Right ventricle myocardium inferior (tissue), 1 donor: ENCODE measurements at regions of chr2 and their contacts with region 1.

Region 1: GRCh38 chr2:229045671-229046070 is 225.4 kb downstream of the PID1 start:
- DNase-seq: no peak
- ATAC-seq: peak; percentile 96

Region 2: GRCh38 chr2:229083606-229084340 is 38.1 kb after region 1 on chr2:
- intact Hi-C with region 1: loop called (anchors 5 kb)
- DNase-seq: no peak
- ATAC-seq: peak; percentile 77

Region 3: DNA sequence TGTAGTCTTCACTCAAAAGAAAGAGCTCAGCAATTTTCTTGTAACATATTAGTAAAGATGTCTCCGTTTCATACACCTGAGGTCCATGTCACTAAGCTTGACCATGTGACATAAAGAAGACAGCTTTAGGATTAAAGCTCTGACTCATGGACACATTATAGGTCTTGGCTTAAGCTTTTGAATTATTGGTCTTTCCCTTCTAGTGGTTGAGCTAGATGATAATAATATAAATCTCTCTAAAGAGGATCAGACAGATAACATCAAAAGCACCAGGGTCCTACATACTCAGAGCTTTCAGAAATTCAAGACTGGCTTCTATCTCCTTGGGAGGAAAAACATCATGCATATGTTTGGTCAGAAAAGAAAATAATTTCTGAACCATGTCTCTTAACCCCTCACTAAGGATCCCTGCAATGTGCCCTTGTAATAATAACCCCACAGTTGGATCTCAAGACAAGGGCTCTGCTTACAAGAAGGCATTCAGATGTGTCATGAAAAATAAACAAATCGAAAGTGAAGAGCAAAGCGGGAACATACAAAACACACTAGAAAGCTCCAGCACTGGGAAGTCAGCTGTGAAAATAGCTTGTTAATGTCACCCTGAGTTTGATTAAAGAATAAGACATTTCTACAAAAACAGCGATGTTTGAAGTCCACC is 50.9 kb after region 1 on chr2:
- intact Hi-C with region 1: no loop called
- DNase-seq: no peak
- ATAC-seq: no peak